CD8-positive, alpha-beta T cell (primary cell): ENCODE measurements at regions of chr14 and their contacts with region 1.

Region 1: DNA sequence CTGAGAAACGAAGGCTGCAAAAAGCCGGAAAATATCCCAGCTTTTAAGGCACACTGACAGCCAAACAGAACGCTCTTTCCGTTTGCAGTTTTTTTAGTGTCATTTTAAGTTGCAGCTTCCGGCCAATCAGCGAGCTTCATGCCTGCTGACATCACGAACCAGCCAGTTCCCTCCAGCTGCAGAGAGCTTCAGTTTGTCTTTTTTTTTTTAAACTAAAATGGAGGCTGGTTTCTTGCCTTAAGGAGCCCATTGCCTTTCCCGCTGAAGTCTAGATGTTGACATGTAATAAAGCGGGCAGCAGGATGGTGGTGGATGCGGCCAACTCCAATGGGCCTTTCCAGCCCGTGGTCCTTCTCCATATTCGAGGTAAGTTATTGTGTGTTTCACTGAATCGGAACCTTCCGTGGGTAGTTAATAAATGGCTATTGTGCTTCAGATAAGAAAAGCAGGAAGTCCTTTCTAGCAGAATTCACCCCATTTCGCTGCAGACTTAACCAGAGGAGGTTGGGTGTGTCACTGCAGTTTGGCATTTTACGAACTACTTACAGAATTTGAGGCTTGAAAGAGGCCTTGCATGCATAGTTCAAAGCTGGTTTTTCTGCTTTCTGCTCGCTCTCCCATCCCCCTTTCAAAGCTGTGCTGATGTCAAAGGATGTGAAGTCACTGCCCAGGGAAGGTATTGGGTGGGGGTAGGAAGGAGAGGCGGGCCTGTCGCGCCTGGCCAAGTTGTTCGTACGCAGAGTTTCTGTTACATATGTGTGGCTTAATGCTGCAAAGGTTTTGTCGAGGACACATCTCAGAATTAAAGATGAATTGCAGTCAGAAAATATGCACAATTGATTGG is 48.4 kb downstream of the PPP2R5C start:
- DNase-seq: peak; percentile 67 to 97 (median 83)
- ATAC-seq: peak; percentile 86
- H3K4me3 ChIP-seq: peak overlapping the region; percentile 78 to 80
- H3K4me3 Mint-ChIP-seq: peak overlapping the region; percentile 94
- H3K27ac ChIP-seq: peak overlapping the region; percentile 97 to 99
- H3K27ac Mint-ChIP-seq: peak overlapping the region; percentile 99
- H3K4me1 ChIP-seq: peaks cover 42% of the 10 kb centered on the region
- H3K4me1 Mint-ChIP-seq: peaks cover 52% of the 10 kb centered on the region
- H3K27me3 ChIP-seq: no peaks in the 10 kb centered on the region
- H3K27me3 Mint-ChIP-seq: no peaks in the 10 kb centered on the region
- CTCF ChIP-seq: no peak

Region 2: DNA sequence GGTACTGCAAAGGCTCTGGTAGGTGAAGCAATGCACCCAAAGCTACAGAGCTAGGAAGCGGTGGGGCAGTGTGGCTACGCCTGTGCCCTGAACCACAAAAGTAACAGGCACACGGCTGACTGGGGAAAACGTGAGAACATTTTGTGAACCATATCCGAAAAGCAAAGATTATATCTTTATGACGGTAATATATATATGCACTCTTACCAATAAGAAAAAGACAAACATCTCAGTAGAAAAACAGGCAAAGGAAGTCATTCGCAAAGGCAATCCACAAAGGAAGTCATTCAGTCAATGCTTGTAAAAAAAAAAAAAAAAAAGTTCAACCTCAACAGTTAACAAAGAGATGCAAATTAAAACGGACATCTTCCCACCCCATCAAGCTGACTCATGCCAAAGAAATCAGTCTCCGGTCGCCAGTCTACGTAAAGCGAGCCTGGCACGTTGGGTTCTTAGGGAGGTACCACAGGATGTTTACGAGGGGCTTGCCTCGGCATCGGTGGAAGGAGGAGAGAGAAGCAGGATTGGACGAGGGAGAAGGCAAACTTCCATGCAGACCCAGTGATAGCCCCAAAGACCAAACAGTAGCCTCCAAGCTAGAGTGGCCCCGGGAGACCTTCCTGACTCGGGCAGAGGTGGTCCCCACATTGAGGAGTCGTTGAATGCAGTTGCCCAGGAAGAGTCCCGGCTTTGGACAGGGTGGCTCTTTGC is 87.8 kb before region 1 on chr14:
- CTCF ChIA-PET with region 1: interaction called, 3 read pairs
- POLR2A ChIA-PET with region 1: interaction called, 7 read pairs
- intact Hi-C with region 1: loop called in 1 of 2 experiments (anchors 1 kb)
- DNase-seq: peak; percentile 60 to 97 (median 79)
- ATAC-seq: peak; percentile 80
- H3K4me3 ChIP-seq: peak overlapping the region; percentile 27 to 42
- H3K4me3 Mint-ChIP-seq: peak overlapping the region; percentile 51
- H3K27ac ChIP-seq: peak overlapping the region; percentile 89 to 94
- H3K27ac Mint-ChIP-seq: peak overlapping the region; percentile 95
- H3K4me1 ChIP-seq: peaks cover 38% of the 10 kb centered on the region
- H3K4me1 Mint-ChIP-seq: peaks cover 57% of the 10 kb centered on the region
- H3K27me3 ChIP-seq: no peaks in the 10 kb centered on the region
- H3K27me3 Mint-ChIP-seq: no peaks in the 10 kb centered on the region
- CTCF ChIP-seq: no peak

Region 3: GRCh38 chr14:101774006-101774795 is 35.7 kb before region 1 on chr14:
- CTCF ChIA-PET with region 1: interaction called, 28 read pairs
- POLR2A ChIA-PET with region 1: interaction called, 15 read pairs
- intact Hi-C with region 1: no loop called
- DNase-seq: no peak
- ATAC-seq: no peak
- H3K4me3 ChIP-seq: no peak overlapping the region
- H3K4me3 Mint-ChIP-seq: no peak overlapping the region
- H3K27ac ChIP-seq: no peak overlapping the region
- H3K27ac Mint-ChIP-seq: peak overlapping the region; percentile 58
- H3K4me1 ChIP-seq: no peaks in the 10 kb centered on the region
- H3K4me1 Mint-ChIP-seq: peaks cover 37% of the 10 kb centered on the region
- H3K27me3 ChIP-seq: no peaks in the 10 kb centered on the region
- H3K27me3 Mint-ChIP-seq: no peaks in the 10 kb centered on the region
- CTCF ChIP-seq: no peak

Region 4: DNA sequence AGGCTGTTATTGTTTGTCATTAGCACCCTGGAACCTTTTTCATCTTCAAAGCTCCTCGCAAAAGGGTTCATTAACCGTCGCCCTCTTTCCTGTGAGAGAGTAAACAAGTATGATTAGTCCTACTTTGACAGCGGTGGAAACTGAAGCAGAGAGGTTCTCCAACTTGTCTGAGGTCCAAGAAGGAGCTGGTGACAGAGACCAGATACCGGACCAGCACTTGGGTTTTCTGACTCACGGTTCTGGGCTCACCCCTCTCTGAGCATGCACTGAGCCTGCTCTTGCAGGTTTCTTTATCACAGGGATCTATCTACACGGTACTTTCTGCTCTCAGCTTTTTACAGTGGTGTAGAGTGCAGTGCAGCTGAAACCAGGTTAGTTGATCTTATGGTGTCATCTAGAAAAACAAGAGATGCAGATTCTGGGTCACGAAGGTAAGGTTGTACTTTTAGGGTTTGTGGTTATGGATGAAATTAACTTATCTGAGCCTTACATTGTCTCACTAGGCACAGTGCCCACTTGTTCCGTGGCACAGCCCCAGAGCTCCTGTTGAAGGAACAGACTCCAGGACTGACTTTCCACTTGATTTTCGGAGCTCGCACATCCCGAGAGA is 13.7 kb after region 1 on chr14:
- CTCF ChIA-PET with region 1: interaction called, 29 read pairs
- POLR2A ChIA-PET with region 1: interaction called, 239 read pairs
- intact Hi-C with region 1: loop called (anchors 1 kb)
- DNase-seq: peak in 8 of 9 experiments; percentile 58 to 89 (median 75)
- ATAC-seq: peak; percentile 61
- H3K4me3 ChIP-seq: peak overlapping the region; percentile 60 to 61
- H3K4me3 Mint-ChIP-seq: peak overlapping the region; percentile 92
- H3K27ac ChIP-seq: peak overlapping the region; percentile 82 to 99
- H3K27ac Mint-ChIP-seq: peak overlapping the region; percentile 100
- H3K4me1 ChIP-seq: peaks cover 83% of the 10 kb centered on the region
- H3K4me1 Mint-ChIP-seq: peaks cover 86% of the 10 kb centered on the region
- H3K27me3 ChIP-seq: no peaks in the 10 kb centered on the region
- H3K27me3 Mint-ChIP-seq: no peaks in the 10 kb centered on the region
- CTCF ChIP-seq: no peak

Region 5: DNA sequence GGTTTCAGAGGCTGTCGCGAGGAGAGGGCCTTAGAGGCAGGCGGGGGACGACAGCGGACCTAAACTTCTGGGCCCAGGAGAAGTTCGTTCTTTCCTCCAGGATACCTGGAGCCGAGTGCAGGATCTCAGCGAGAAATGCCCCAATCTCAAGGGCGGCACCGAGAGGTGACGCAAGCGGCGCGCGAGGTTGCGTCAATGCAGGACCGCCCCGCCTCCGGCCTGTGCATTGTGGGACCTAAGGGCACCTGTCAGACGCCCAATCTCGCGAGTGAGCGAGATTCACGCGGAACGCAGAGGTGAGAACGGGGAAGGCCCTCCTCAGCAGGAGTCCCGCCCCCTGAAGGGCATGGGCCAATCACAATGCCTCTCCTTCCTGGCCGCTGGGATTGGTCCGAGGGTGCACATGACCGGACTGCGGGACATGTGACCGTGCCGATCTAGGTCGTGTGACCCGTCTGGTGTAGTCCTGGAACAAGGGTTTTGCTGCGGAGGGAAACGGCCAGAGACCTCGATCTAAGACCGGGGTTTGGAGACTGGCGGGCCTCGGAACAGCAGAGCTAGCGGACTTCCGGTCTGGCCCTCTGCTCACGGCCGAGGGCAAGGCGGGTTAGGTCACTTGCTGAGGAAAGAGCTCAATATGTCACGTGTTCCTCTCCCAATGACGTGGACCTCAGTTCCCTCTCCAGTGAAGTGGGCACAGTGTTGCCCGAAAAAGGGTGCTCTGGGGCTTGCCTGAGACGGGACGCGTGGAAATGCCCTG is 138.2 kb after region 1 on chr14:
- CTCF ChIA-PET with region 1: no interaction called
- POLR2A ChIA-PET with region 1: interaction called, 3 read pairs
- intact Hi-C with region 1: loop called in 1 of 2 experiments (anchors 2 kb)
- DNase-seq: peak; percentile 98 to 100 (median 99)
- ATAC-seq: peak; percentile 95
- H3K4me3 ChIP-seq: peak overlapping the region; percentile 81 to 82
- H3K4me3 Mint-ChIP-seq: peak overlapping the region; percentile 93
- H3K27ac ChIP-seq: peak overlapping the region; percentile 95 to 100
- H3K27ac Mint-ChIP-seq: peak overlapping the region; percentile 99
- H3K4me1 ChIP-seq: peaks cover 14% of the 10 kb centered on the region
- H3K4me1 Mint-ChIP-seq: peaks cover 20% of the 10 kb centered on the region
- H3K27me3 ChIP-seq: peaks cover 0 to 6% of the 10 kb centered on the region in 2 experiments
- H3K27me3 Mint-ChIP-seq: peaks cover 23% of the 10 kb centered on the region
- CTCF ChIP-seq: no peak